Activated CD4-positive, alpha-beta memory T cell treated with anti-CD3 and anti-CD28 coated beads for 36 hours (primary cell): ENCODE measurements at regions of chr16 and their contacts with region 1.

Region 1: GRCh38 chr16:74623214-74623842 is 16.4 kb upstream of the GLG1 start:
- DNase-seq: no peak
- H3K4me3 Mint-ChIP-seq: no peak overlapping the region
- H3K27ac Mint-ChIP-seq: no peak overlapping the region
- H3K4me1 Mint-ChIP-seq: peaks cover 38% of the 10 kb centered on the region
- H3K27me3 Mint-ChIP-seq: no peaks in the 10 kb centered on the region

Region 2: DNA sequence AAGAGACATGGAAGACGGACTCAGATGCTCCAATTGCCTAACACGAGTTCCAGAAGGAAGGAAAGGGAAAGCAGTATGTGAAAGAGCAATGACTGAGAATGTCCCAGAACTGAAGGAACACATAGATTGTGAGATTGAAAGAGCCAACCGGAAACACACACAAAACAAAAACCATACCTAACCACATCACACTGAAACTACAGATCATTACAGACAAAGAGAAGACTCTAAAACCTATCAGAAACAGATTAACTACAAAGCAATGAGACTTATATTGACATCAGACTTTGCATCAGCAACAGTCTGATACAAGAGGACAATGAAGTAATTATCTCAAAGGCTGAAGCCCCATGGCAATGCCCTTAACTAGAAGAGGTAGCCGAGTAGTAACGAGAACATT is 156.5 kb before region 1 on chr16:
- CTCF ChIA-PET with region 1: interaction called, 3 read pairs
- POLR2A ChIA-PET with region 1: interaction called, 3 read pairs
- intact Hi-C with region 1: loop called (anchors 1 kb)
- DNase-seq: no peak
- H3K4me3 Mint-ChIP-seq: no peak overlapping the region
- H3K27ac Mint-ChIP-seq: peak overlapping the region; percentile 50
- H3K4me1 Mint-ChIP-seq: peaks cover 32% of the 10 kb centered on the region
- H3K27me3 Mint-ChIP-seq: no peaks in the 10 kb centered on the region

Region 3: DNA sequence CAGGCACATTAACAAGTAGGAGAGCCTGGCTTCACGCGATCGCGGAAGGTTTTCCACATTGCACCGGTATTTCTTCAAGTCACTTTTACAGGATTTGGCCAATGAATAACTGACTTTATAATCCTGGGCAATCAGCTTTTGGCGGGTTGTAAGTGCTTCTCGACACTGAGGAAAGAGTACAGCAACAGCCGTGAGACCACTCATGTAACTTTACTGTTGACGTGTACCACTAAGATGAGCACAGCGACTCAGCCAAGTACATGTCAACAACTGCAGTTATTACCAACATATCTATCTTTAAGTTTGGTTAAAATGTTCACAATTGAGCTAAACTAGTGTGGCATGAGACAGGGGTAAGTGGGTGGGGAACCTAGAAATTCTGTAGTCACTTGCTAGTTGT is 130.4 kb before region 1 on chr16:
- CTCF ChIA-PET with region 1: interaction called, 10 read pairs
- POLR2A ChIA-PET with region 1: no interaction called
- intact Hi-C with region 1: loop called (anchors 10 kb)
- DNase-seq: no peak
- H3K4me3 Mint-ChIP-seq: no peak overlapping the region
- H3K27ac Mint-ChIP-seq: no peak overlapping the region
- H3K4me1 Mint-ChIP-seq: peaks cover 2% of the 10 kb centered on the region
- H3K27me3 Mint-ChIP-seq: no peaks in the 10 kb centered on the region

Region 4: GRCh38 chr16:74666425-74667254 is 43.3 kb after region 1 on chr16 and contains the start of gene RFWD3:
- CTCF ChIA-PET with region 1: interaction called, 5 read pairs
- POLR2A ChIA-PET with region 1: interaction called, 10 read pairs
- intact Hi-C with region 1: loop called (anchors 2 kb)
- DNase-seq: peak; percentile 98
- H3K4me3 Mint-ChIP-seq: peak within 1 kb of the TSS; percentile 85
- H3K27ac Mint-ChIP-seq: peak within 1 kb of the TSS; percentile 91
- H3K4me1 Mint-ChIP-seq: peaks cover 39% of the 10 kb centered on the region
- H3K27me3 Mint-ChIP-seq: no peaks in the 10 kb centered on the region
- total RNA-seq, gene RFWD3: 95.3 to 109 TPM